ENCODE measurements at regions of chr19 and their contacts with region 1.

Region 1: GRCh38 chr19:54481322-54481930 is 8.3 kb upstream of the CDC42EP5 start:
- DNase-seq: no peak
- ATAC-seq: no peak
- H3K4me3 ChIP-seq: no peak overlapping the region
- H3K27ac ChIP-seq: no peak overlapping the region
- H3K4me1 ChIP-seq: no peaks in the 10 kb centered on the region
- H3K27me3 ChIP-seq: peaks cover 0 to 15% (median 0%) of the 10 kb centered on the region in 3 donors
- CTCF ChIP-seq: peak; percentile 47

Region 2: DNA sequence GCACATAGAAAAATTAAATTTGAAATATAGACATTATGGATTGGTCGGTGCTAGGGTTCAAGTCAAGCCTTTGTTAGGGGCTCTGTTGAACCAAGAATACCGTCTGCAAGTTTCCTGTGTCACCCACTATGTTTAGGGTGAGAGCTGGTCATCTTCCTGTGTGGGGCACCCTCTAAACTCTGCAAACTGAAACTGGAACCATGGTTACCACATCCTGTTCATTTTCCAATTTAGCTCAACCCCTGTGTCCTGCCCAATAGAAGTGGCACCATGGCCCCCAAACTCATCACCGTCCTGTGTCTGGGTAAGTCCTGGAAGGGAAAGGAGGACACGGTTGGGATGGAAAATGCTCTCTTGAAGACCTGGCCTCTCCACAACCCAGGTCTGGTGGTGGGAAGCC is 51.1 kb after region 1 on chr19:
- intact Hi-C with region 1: no loop called
- DNase-seq: no peak
- ATAC-seq: no peak
- H3K4me3 ChIP-seq: no peak overlapping the region
- H3K27ac ChIP-seq: no peak overlapping the region
- H3K4me1 ChIP-seq: no peaks in the 10 kb centered on the region
- H3K27me3 ChIP-seq: peaks cover 0 to 2% (median 0%) of the 10 kb centered on the region in 3 donors
- CTCF ChIP-seq: no peak

Region 3: DNA sequence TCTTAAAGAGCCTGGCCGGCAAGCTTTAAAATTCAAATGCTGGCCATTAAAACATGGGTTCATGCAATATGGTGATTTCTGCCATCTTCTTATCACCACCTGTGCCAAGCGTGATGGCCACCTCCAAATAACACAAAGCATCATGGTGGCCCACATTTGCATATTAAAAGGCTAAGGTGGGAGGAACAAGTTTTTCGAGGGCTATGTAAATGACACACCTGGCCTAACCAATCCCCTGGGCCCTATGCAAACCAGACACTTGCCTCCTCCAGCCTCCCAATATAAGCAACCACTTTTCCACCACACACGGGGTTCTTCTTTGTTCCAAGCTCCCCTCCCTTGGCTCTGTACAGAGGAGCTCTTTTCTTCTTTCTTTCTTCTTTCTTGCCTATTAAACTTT is 195.8 kb after region 1 on chr19:
- intact Hi-C with region 1: loop called in 1 of 2 experiments (anchors 5 kb)
- DNase-seq: no peak
- ATAC-seq: no peak
- H3K4me3 ChIP-seq: no peak overlapping the region
- H3K27ac ChIP-seq: no peak overlapping the region
- H3K4me1 ChIP-seq: no peaks in the 10 kb centered on the region
- H3K27me3 ChIP-seq: no peaks in the 10 kb centered on the region
- CTCF ChIP-seq: no peak